ENCODE measurements at regions of chr10 and their contacts with region 1.

Region 1: GRCh38 chr10:126921974-126922525 is 16.8 kb downstream of the DOCK1 start:
- DNase-seq: no peak
- ATAC-seq: no peak
- H3K4me3 ChIP-seq: no peak overlapping the region
- H3K27ac ChIP-seq: no peak overlapping the region
- H3K4me1 ChIP-seq: 0 out of 2 replicates have a peak, but pooled peaks cover 5% of the 10 kb centered on the region
- H3K27me3 ChIP-seq: no peaks in the 10 kb centered on the region
- CTCF ChIP-seq: no peak

Region 2: DNA sequence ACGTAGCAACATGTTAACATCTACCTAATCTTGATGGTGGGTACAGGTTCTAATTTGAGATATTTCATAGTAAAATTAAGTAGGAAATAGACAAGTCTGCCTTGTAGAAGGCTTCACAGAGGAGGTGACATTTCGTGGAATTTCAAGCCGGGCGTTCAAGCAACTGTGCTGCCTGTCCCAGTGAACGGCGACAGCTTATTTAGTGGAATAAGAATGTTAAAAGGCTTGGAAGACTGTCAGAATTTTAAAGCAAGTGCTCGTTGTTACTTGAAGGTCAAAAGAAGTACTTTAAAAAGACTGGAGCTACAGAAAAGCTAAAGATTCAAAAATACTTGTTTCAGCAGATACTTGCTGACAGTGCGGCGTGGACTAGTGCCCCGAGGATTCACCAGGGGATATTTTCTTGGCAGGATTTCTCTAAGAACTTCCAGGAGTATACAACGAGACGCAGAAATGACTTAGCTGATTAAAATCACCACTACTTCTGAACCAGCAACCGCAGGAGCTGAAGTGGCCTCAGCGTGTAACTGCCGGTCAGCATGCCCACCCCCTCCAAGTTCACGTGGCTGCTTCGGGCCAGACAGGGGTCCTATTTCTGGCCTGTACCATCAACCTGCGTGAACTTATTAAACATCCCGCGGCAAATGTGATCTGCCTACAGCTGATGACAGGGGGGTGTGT is 1808.2 kb before region 1 on chr10:
- CTCF ChIA-PET with region 1: no interaction called
- POLR2A ChIA-PET with region 1: no interaction called
- in situ Hi-C with region 1: no loop called
- intact Hi-C with region 1: no loop called
- DNase-seq: no peak
- ATAC-seq: no peak
- H3K4me3 ChIP-seq: no peak overlapping the region
- H3K27ac ChIP-seq: no peak overlapping the region
- H3K4me1 ChIP-seq: peaks cover 24% of the 10 kb centered on the region
- H3K27me3 ChIP-seq: no peaks in the 10 kb centered on the region
- CTCF ChIP-seq: no peak

Region 3: DNA sequence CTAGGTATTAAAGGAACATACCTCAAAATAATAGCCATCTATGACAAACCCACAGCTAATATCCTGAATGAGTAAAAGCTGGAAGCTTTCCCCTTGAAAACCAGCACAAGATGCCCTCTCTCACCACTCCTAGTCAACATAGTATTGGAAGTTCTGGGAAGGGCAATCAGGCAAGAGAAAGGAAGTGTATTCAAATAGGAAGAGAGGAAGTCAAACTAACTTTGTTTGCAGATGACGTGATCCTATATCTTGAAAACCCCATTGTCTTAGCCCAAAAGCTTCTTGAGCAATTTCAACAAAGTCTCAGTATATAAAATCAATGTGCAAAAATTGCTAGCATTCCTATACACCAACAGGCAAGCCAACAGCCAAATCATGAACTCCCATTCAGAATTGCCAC is 894.4 kb before region 1 on chr10:
- CTCF ChIA-PET with region 1: no interaction called
- POLR2A ChIA-PET with region 1: interaction called, 11 read pairs
- in situ Hi-C with region 1: no loop called
- intact Hi-C with region 1: no loop called
- DNase-seq: no peak
- ATAC-seq: no peak
- H3K4me3 ChIP-seq: no peak overlapping the region
- H3K27ac ChIP-seq: no peak overlapping the region
- H3K4me1 ChIP-seq: no peaks in the 10 kb centered on the region
- H3K27me3 ChIP-seq: no peaks in the 10 kb centered on the region
- CTCF ChIP-seq: no peak

Region 4: GRCh38 chr10:127441350-127442219 is 519.5 kb after region 1 on chr10:
- CTCF ChIA-PET with region 1: no interaction called
- POLR2A ChIA-PET with region 1: no interaction called
- in situ Hi-C with region 1: no loop called
- intact Hi-C with region 1: no loop called
- DNase-seq: no peak
- ATAC-seq: no peak
- H3K4me3 ChIP-seq: no peak overlapping the region
- H3K27ac ChIP-seq: no peak overlapping the region
- H3K4me1 ChIP-seq: no peaks in the 10 kb centered on the region
- H3K27me3 ChIP-seq: no peaks in the 10 kb centered on the region
- CTCF ChIP-seq: no peak

Region 5: GRCh38 chr10:127497685-127498535 is 575.9 kb after region 1 on chr10:
- CTCF ChIA-PET with region 1: no interaction called
- POLR2A ChIA-PET with region 1: interaction called, 12 read pairs
- in situ Hi-C with region 1: no loop called
- intact Hi-C with region 1: no loop called
- DNase-seq: no peak
- ATAC-seq: no peak
- H3K4me3 ChIP-seq: no peak overlapping the region
- H3K27ac ChIP-seq: no peak overlapping the region
- H3K4me1 ChIP-seq: no peaks in the 10 kb centered on the region
- H3K27me3 ChIP-seq: peaks cover 47% of the 10 kb centered on the region
- CTCF ChIP-seq: no peak